ENCODE measurements at regions of chr17 and their contacts with region 1.

Region 1: DNA sequence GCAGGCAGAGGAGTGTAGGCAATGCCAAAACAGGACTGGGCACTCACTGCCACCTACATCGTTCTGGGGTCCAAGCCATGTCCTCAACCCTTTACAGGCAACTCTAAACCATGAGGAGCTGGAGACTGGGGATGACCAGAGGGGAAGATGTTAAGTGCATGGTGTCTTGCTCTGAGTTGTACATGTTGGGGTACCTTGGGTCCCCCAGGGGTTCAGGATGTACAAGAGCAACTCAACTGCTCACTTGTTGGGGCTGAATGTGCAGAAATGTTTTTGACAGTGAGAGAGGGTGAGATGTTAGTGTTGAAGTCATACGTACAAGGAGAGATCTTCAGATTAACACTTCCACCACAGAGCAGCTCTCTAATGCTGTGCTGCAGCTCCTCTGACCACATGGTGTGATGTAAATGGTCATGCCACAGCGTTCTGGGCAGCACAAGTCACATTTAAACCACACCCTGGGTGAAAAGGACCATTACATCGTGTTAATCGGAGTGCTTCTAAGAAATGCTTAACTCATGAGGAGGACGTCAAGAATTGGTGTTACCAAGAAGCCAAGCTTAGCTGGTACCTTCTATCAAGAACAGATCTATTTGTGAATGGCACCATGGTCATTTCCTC is 2.4 kb downstream of the CCL18 start:
- DNase-seq: peak; percentile 64
- ATAC-seq: peak; percentile 85
- H3K4me3 Mint-ChIP-seq: no peak overlapping the region
- H3K27ac Mint-ChIP-seq: peak overlapping the region; percentile 74
- H3K4me1 Mint-ChIP-seq: peaks cover 16% of the 10 kb centered on the region
- H3K27me3 Mint-ChIP-seq: peaks cover 6% of the 10 kb centered on the region

Region 2: GRCh38 chr17:35981908-35982330 is 84.6 kb before region 1 on chr17:
- CTCF ChIA-PET with region 1: interaction called, 22 read pairs
- POLR2A ChIA-PET with region 1: no interaction called
- DNase-seq: no peak
- ATAC-seq: no peak
- H3K4me3 Mint-ChIP-seq: no peak overlapping the region
- H3K27ac Mint-ChIP-seq: no peak overlapping the region
- H3K4me1 Mint-ChIP-seq: no peaks in the 10 kb centered on the region
- H3K27me3 Mint-ChIP-seq: peaks cover 7% of the 10 kb centered on the region

Region 3: DNA sequence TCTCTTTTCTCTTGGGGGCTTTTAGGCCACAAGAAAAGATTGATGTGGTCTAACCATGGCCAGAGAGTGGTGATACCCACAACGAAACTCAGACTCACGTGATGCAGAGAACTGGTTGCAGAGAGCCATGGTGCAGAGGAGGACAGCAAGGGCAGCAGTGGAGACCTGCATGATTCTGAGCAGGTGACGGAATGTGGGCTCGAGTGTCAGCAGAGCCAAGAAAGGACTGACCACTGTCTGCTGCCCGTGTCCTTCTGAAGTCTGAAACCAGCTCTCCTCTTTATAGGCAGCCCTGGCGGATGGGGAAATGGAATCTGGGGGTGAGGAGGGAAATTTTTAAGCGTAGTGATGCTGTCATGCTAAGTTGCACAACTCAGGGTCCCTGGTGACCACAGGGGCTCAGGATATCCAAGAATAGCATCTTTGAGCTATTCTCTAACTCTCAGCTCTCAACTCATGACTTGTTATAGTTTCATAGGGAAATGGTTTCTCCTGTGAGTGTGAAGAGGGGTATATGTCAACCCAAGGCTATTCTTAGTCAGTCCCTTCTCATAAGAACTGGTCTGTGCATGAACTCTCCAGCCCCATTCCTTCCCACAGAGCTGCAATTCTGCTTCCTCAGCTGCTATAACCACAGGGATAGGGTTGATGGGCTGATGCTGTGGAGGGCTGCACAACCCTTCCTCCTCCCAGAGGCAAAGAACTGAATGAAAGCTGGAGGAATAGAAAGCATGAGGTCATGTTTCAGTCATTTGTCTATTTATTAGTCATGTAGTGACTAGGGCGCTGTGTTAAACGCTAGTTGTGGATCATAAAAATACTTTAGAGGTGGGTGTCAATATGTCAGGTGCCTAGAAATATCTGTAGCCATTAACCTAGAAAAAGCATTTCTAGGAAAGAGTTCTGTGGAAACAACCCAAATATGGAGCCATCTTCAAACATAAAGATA is 23.7 kb after region 1 on chr17 and contains the start of gene CCL3:
- CTCF ChIA-PET with region 1: interaction called, 38 read pairs
- POLR2A ChIA-PET with region 1: interaction called, 11 read pairs
- DNase-seq: peak; percentile 50
- ATAC-seq: peak; percentile 59
- H3K4me3 Mint-ChIP-seq: peak within 1 kb of the TSS; percentile 55
- H3K27ac Mint-ChIP-seq: peak within 1 kb of the TSS; percentile 82
- H3K4me1 Mint-ChIP-seq: peaks cover 55% of the 10 kb centered on the region
- H3K27me3 Mint-ChIP-seq: peaks cover 31% of the 10 kb centered on the region
- total RNA-seq, gene CCL3: 4.2 to 5.1 TPM